Ovary (tissue), 10 donors: ENCODE measurements at regions of chr9 and their contacts with region 1.

Region 1: GRCh38 chr9:20112205-20112783 is 323.5 kb upstream of the SLC24A2 start:
- DNase-seq: no peak
- H3K4me3 ChIP-seq: no peak overlapping the region
- H3K27ac ChIP-seq: no peak overlapping the region
- H3K4me1 ChIP-seq: no peaks in the 10 kb centered on the region
- H3K27me3 ChIP-seq: no peaks in the 10 kb centered on the region
- CTCF ChIP-seq: no peak
- EP300 ChIP-seq: no peak
- POLR2A ChIP-seq: no peak

Region 2: DNA sequence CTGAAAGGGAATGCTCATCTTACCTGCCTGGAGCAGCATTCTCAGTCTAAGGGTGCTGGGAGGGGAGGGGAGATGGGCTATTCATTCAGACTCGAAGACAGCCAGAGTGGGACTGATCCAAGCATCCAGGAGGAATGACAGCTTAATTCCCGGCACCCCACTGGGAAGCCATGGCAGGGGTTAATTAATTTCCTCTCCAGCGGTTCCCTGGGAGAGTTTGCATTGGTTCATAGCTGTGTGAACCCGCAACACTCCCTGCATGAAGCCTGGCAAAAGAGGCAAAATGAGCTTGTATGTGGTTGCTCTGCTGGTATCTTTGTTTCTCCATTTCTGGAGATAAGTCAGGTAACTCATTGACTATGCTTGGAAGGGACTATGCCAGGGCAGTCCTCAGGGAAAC is 77.6 kb after region 1 on chr9:
- intact Hi-C with region 1: loop called in 1 of 4 experiments (anchors 10 kb)
- DNase-seq: no peak
- H3K4me3 ChIP-seq: no peak overlapping the region
- H3K27ac ChIP-seq: no peak overlapping the region
- H3K4me1 ChIP-seq: no peaks in the 10 kb centered on the region
- H3K27me3 ChIP-seq: no peaks in the 10 kb centered on the region
- CTCF ChIP-seq: no peak
- EP300 ChIP-seq: no peak
- POLR2A ChIP-seq: no peak